ENCODE measurements at regions of chr4 and their contacts with region 1.

Region 1: GRCh38 chr4:4488405-4489404 is 53.1 kb downstream of the STX18 start:
- DNase-seq: peak; percentile 70
- CTCF ChIP-seq: peak; percentile 87

Region 2: DNA sequence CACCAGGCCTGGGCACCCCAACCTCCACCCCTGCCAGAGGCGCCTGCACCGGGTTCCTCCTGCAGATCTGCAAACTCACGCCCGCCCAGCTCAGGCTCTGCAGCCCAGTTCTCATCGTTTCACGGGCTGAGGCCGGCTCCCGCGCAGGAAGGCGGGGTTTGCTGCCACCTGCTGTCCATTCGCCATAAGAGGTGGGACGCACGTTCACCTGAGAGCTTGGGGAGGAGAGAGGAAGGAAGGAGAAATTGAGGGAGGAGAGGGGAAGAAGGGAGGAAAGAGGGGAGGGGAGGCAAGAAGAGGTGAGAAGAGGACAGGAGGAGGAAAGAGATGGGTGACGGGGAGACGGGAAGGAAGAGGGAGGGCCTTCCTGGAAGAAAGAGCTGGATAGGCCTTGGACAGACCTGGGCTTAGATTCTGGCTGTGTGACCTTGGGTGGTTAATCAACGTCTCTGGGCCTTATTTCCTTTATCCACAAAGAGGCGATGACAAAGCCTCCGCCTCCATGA is 608.0 kb before region 1 on chr4:
- in situ Hi-C with region 1: no loop called
- DNase-seq: peak; percentile 84
- CTCF ChIP-seq: peak; percentile 69

Region 3: GRCh38 chr4:3898098-3898497 is 590.6 kb before region 1 on chr4:
- in situ Hi-C with region 1: no loop called
- DNase-seq: no peak
- CTCF ChIP-seq: no peak

Region 4: DNA sequence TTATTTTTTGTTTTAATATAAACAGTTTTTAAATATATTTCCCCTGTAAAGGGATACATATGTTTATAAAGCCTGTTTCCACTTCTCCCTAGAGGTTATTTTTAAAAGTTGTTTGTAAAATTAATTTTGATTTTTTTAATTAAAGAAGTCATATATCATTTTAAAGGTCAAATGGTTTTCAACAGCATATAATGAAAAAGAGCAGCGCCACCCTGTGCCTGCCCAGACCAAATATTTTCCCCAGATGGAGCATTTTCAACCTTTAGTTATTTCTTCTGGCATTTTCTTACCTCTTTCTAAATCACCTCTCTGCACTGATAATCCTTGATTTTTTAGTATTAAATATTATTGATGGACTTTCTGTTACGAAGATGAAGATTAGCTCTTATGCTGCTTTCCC is 391.8 kb after region 1 on chr4:
- in situ Hi-C with region 1: loop called (anchors 10 kb)
- DNase-seq: peak; percentile 42
- CTCF ChIP-seq: peak; percentile 17

Region 5: GRCh38 chr4:4995103-4995907 is 506.6 kb after region 1 on chr4:
- in situ Hi-C with region 1: loop called (anchors 25 kb)
- DNase-seq: peak; percentile 82
- CTCF ChIP-seq: peak; percentile 84

Measured in GM13976 (cell line).